Natural killer cell (primary cell): ENCODE measurements at regions of chr19 and their contacts with region 1.

Region 1: GRCh38 chr19:14556662-14557188 is 15.1 kb downstream of the NDUFB7 start:
- DNase-seq: peak; percentile 73 to 89
- ATAC-seq: peak; percentile 77 to 86 (median 84)
- H3K4me3 ChIP-seq: peak overlapping the region; percentile 0
- H3K4me3 Mint-ChIP-seq: peak overlapping the region; percentile 77
- H3K27ac ChIP-seq: peak overlapping the region; percentile 69
- H3K27ac Mint-ChIP-seq: peak overlapping the region; percentile 83 to 91
- H3K4me1 ChIP-seq: peaks cover 78% of the 10 kb centered on the region
- H3K4me1 Mint-ChIP-seq: peaks cover 27 to 49% of the 10 kb centered on the region in 2 donors
- H3K27me3 ChIP-seq: no peaks in the 10 kb centered on the region
- H3K27me3 Mint-ChIP-seq: no peaks in the 10 kb centered on the region
- CTCF ChIP-seq: peak; percentile 93

Region 2: DNA sequence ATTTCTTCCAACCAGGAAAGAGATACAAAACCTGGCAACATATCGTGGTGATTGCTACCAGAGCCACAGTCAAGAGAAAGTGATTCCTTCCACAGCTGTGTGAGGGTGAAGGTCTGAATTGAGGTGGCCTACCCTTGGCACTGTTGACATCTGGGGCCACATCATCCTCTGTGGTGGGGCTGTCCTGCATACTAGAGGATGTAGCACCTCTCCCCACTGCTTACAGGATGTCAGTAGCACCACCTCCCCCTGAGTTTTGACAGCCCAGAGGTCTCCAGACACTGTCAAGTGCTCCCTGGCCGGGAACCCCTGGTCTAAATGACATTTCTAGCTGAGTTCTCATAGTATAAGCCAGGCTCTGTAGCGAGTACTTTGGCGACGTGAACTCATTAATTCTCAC is 97.0 kb before region 1 on chr19:
- intact Hi-C with region 1: no loop called
- DNase-seq: peak; percentile 74 to 75
- ATAC-seq: peak; percentile 97 to 99 (median 99)
- H3K4me3 ChIP-seq: no peak overlapping the region
- H3K4me3 Mint-ChIP-seq: peak overlapping the region; percentile 82
- H3K27ac ChIP-seq: peak overlapping the region; percentile 76
- H3K27ac Mint-ChIP-seq: peak overlapping the region; percentile 64 to 72
- H3K4me1 ChIP-seq: peaks cover 28% of the 10 kb centered on the region
- H3K4me1 Mint-ChIP-seq: peaks cover 31 to 34% of the 10 kb centered on the region in 2 donors
- H3K27me3 ChIP-seq: no peaks in the 10 kb centered on the region
- H3K27me3 Mint-ChIP-seq: no peaks in the 10 kb centered on the region
- CTCF ChIP-seq: no peak

Region 3: DNA sequence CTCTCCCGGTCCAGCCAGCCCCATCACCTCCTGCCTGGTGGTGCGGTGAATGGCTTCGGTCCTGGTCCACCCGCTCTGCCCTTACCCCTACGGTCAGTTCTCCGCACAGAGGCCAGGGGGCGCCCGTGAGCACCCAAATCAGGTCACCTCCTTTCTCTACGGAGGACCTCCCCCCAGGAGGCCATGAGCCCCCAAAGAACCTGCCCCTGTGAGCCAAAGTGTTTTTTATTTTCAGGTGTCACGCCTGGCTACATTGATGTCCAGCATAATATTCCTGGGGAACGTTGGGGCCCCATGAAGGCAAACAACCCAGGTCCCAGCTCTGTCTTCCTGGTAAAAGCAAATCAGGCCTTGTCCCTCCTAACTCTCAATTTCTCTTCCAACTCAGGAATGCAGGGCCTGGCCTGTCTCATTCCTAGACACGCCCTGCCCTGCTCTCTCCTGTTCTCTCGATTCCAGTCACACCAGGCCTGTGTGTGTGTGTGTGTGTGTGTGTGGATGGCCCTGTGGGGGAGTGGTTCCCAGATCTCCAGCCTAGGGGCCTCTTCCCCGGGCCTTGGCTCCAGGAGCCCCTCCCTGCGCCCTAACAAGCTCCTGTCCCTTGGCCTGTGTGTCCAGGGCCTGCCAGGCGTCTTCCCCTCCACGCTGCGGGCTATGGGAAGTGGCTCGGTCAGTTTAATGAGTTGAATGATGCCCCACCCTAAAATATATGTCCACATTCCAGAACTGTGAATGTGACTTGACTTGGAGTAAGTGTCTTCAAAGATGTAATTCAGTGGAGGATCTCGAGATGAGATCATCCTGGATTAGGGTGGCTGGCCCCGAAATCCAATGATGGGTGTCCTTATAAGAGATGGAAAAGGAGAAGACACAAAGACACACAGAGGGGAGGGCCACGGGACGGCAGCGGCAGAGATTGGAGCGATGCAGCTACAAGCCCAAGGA is 51.0 kb before region 1 on chr19:
- intact Hi-C with region 1: loop called (anchors 1 kb)
- DNase-seq: peak; percentile 70 to 83
- ATAC-seq: peak; percentile 82 to 89 (median 87)
- H3K4me3 ChIP-seq: no peak overlapping the region
- H3K4me3 Mint-ChIP-seq: no peak overlapping the region
- H3K27ac ChIP-seq: no peak overlapping the region
- H3K27ac Mint-ChIP-seq: no peak overlapping the region
- H3K4me1 ChIP-seq: peaks cover 28% of the 10 kb centered on the region
- H3K4me1 Mint-ChIP-seq: peaks cover 11 to 15% of the 10 kb centered on the region in 2 donors
- H3K27me3 ChIP-seq: no peaks in the 10 kb centered on the region
- H3K27me3 Mint-ChIP-seq: peaks cover 0 to 2% of the 10 kb centered on the region in 2 donors
- CTCF ChIP-seq: peak; percentile 69

Region 4: DNA sequence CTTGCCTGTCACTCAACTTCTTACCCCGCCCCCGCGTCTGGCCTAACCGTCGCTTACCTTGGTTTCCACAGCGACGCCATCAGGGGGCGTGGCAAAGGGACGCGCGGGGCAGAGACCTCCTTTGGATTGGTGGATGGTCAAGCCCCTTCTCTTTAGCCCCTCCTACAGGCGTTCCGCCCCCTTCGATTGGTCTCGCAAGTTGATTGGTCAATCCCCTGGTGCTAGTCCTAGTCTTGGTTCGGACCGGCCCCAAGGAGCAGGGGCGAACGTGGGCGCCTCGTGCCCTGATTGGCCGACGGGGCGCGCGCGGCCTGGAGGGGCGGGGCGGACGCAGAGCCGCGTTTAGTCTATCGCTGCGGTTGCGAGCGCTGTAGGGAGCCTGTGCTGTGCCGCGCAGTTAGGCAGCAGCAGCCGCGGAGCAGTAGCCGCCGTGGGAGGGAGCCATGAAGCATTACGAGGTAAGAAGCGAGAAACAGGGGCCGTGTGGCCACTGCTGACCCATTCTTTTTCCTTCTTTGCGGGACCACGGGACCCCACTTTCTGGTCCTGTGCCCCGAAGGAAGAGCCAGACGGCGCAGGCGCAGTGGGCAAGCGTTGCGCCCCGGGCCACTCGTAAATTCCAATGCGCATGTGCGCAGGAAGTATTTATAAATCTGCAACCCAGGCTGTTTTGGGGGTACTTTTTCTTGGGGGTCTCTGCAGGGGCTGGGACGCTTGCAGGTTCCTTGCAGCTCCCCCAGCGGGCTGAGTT is 27.3 kb before region 1 on chr19 and contains the start of gene TECR:
- intact Hi-C with region 1: no loop called
- DNase-seq: peak; percentile 99 to 100
- ATAC-seq: peak; percentile 93 to 99 (median 94)
- H3K4me3 ChIP-seq: peak within 1 kb of the TSS; percentile 64
- H3K4me3 Mint-ChIP-seq: peak within 1 kb of the TSS; percentile 96
- H3K27ac ChIP-seq: peak within 1 kb of the TSS; percentile 86
- H3K27ac Mint-ChIP-seq: peak within 1 kb of the TSS; percentile 95 to 97
- H3K4me1 ChIP-seq: peaks cover 20% of the 10 kb centered on the region
- H3K4me1 Mint-ChIP-seq: peaks cover 9 to 12% of the 10 kb centered on the region in 2 donors
- H3K27me3 ChIP-seq: no peaks in the 10 kb centered on the region
- H3K27me3 Mint-ChIP-seq: no peaks in the 10 kb centered on the region
- CTCF ChIP-seq: no peak
- total RNA-seq, gene TECR: 123 to 158 (median 131) TPM

Region 5: DNA sequence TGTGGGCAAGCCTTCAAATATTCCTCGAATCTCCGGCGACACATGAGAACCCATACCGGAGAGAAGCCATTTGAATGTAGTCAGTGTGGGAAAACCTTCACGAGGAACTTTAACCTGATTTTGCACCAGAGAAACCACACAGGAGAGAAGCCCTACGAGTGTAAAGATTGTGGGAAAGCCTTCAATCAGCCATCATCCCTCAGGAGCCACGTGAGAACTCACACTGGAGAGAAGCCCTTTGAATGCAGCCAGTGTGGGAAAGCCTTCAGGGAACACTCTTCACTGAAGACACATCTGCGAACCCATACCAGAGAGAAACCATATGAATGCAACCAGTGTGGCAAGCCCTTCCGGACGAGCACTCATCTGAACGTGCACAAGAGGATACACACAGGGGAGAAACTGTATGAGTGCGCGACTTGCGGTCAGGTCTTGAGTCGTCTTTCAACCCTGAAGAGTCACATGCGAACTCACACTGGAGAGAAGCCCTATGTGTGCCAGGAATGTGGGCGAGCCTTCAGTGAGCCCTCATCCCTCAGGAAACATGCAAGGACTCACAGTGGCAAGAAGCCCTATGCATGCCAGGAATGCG is 161.9 kb after region 1 on chr19:
- intact Hi-C with region 1: no loop called
- DNase-seq: no peak
- ATAC-seq: no peak
- H3K4me3 ChIP-seq: no peak overlapping the region
- H3K4me3 Mint-ChIP-seq: no peak overlapping the region
- H3K27ac ChIP-seq: no peak overlapping the region
- H3K27ac Mint-ChIP-seq: no peak overlapping the region
- H3K4me1 ChIP-seq: no peaks in the 10 kb centered on the region
- H3K4me1 Mint-ChIP-seq: peaks cover 0 to 13% of the 10 kb centered on the region in 2 donors
- H3K27me3 ChIP-seq: no peaks in the 10 kb centered on the region
- H3K27me3 Mint-ChIP-seq: no peaks in the 10 kb centered on the region
- CTCF ChIP-seq: no peak